ENCODE measurements at regions of chr7 and their contacts with region 1.

Region 1: GRCh38 chr7:7103343-7104313 is 78.7 kb upstream of the C1GALT1 start:
- DNase-seq: no peak
- H3K4me3 Mint-ChIP-seq: no peak overlapping the region
- H3K27ac Mint-ChIP-seq: no peak overlapping the region
- H3K4me1 Mint-ChIP-seq: peaks cover 24% of the 10 kb centered on the region
- H3K27me3 Mint-ChIP-seq: no peaks in the 10 kb centered on the region

Region 2: DNA sequence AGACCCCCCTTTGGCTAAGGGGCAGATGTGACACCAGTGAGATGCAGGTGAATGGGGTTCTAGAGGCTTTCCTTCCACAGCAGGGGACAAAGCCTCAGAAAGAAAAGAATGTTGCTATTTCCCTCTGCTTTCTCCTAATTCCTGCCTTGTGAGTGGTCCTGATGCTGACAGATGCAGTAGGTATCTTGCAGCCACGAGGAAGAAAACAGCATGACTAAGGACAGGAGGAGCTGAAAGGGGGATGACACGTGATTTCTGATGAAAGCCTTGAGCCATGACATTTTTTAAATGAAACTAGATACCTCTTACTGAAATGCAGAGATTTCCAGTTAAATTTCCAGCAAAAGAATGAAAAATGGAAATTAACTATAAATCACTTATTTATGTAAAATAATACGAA is 171.2 kb after region 1 on chr7:
- CTCF ChIA-PET with region 1: no interaction called
- intact Hi-C with region 1: loop called (anchors 5 kb)
- DNase-seq: no peak
- H3K4me3 Mint-ChIP-seq: no peak overlapping the region
- H3K27ac Mint-ChIP-seq: no peak overlapping the region
- H3K4me1 Mint-ChIP-seq: no peaks in the 10 kb centered on the region
- H3K27me3 Mint-ChIP-seq: no peaks in the 10 kb centered on the region

Region 3: GRCh38 chr7:7352845-7353244 is 249.2 kb after region 1 on chr7:
- CTCF ChIA-PET with region 1: no interaction called
- intact Hi-C with region 1: loop called (anchors 5 kb)
- DNase-seq: no peak
- H3K4me3 Mint-ChIP-seq: no peak overlapping the region
- H3K27ac Mint-ChIP-seq: no peak overlapping the region
- H3K4me1 Mint-ChIP-seq: no peaks in the 10 kb centered on the region
- H3K27me3 Mint-ChIP-seq: no peaks in the 10 kb centered on the region

Region 4: DNA sequence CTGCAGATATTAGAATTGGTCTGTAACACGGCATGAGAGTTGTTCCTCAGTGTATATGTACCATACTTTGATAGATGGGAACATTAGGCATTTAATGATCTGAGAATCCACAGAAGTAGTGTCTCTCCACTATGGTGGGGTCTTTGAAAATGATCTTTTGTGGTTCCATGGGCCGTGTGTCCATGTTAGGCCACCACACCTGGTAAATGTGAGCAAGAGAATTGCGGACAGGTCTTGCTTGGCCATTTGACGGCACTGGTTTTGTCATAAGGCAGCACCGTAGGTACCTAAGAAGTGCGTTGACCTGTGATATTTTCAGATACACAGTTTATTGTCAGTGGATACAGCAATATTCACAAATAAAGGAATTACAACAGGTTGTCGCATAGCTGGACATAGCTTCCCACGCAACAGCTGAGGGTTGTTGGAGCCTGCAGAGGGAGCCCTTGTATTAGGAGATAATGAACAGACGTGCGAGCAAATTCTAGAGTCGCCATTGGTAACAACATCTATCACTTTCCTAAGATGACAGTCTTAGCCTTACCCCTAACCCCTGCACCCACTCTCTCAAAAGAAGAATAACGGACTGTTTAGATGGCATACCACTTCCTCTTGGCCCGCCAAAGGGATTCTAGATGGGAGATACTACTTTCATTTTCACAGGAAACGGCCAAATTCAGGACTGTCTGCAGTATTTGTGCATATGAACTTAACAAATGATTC is 320.7 kb after region 1 on chr7:
- CTCF ChIA-PET with region 1: interaction called, 3 read pairs
- intact Hi-C with region 1: loop called (anchors 5 kb)
- DNase-seq: peak; percentile 52
- H3K4me3 Mint-ChIP-seq: peak overlapping the region; percentile 42
- H3K27ac Mint-ChIP-seq: no peak overlapping the region
- H3K4me1 Mint-ChIP-seq: no peaks in the 10 kb centered on the region
- H3K27me3 Mint-ChIP-seq: no peaks in the 10 kb centered on the region

Region 5: GRCh38 chr7:7542251-7542835 is 438.7 kb after region 1 on chr7:
- CTCF ChIA-PET with region 1: interaction called, 14 read pairs
- intact Hi-C with region 1: loop called (anchors 2 kb)
- DNase-seq: no peak
- H3K4me3 Mint-ChIP-seq: no peak overlapping the region
- H3K27ac Mint-ChIP-seq: no peak overlapping the region
- H3K4me1 Mint-ChIP-seq: no peaks in the 10 kb centered on the region
- H3K27me3 Mint-ChIP-seq: no peaks in the 10 kb centered on the region

Measured in activated naive CD4-positive, alpha-beta T cell treated with anti-CD3 and anti-CD28 coated beads for 36 hours (primary cell).